Upper lobe of right lung (tissue), 1 donor: ENCODE measurements at regions of chr1 and their contacts with region 1.

Region 1: GRCh38 chr1:221435504-221435904 is 306.4 kb downstream of the DUSP10 start:
- DNase-seq: no peak
- ATAC-seq: peak; percentile 93
- H3K4me3 ChIP-seq: no peak overlapping the region
- H3K27ac ChIP-seq: no peak overlapping the region
- H3K4me1 ChIP-seq: peaks cover 8% of the 10 kb centered on the region
- H3K27me3 ChIP-seq: no peaks in the 10 kb centered on the region
- CTCF ChIP-seq: peak; percentile 97

Region 2: GRCh38 chr1:220879509-220880361 is 555.8 kb before region 1 on chr1:
- intact Hi-C with region 1: loop called (anchors 10 kb)
- DNase-seq: peak; percentile 81
- ATAC-seq: peak; percentile 68
- H3K4me3 ChIP-seq: peak overlapping the region; percentile 70
- H3K27ac ChIP-seq: peak overlapping the region; percentile 96
- H3K4me1 ChIP-seq: peaks cover 21% of the 10 kb centered on the region
- H3K27me3 ChIP-seq: no peaks in the 10 kb centered on the region
- CTCF ChIP-seq: no peak

Region 3: GRCh38 chr1:221263831-221264767 is 171.4 kb before region 1 on chr1:
- intact Hi-C with region 1: loop called (anchors 10 kb)
- DNase-seq: no peak
- ATAC-seq: peak; percentile 92
- H3K4me3 ChIP-seq: no peak overlapping the region
- H3K27ac ChIP-seq: no peak overlapping the region
- H3K4me1 ChIP-seq: peaks cover 4% of the 10 kb centered on the region
- H3K27me3 ChIP-seq: no peaks in the 10 kb centered on the region
- CTCF ChIP-seq: peak; percentile 73